RWPE1 (cell line): ENCODE measurements at regions of chr12 and their contacts with region 1.

Region 1: GRCh38 chr12:53267999-53268647 is at the start of gene ESPL1:
- DNase-seq: peak; percentile 87
- H3K27ac ChIP-seq: peak within 1 kb of the TSS; percentile 77
- CTCF ChIP-seq: peak; percentile 60

Region 2: DNA sequence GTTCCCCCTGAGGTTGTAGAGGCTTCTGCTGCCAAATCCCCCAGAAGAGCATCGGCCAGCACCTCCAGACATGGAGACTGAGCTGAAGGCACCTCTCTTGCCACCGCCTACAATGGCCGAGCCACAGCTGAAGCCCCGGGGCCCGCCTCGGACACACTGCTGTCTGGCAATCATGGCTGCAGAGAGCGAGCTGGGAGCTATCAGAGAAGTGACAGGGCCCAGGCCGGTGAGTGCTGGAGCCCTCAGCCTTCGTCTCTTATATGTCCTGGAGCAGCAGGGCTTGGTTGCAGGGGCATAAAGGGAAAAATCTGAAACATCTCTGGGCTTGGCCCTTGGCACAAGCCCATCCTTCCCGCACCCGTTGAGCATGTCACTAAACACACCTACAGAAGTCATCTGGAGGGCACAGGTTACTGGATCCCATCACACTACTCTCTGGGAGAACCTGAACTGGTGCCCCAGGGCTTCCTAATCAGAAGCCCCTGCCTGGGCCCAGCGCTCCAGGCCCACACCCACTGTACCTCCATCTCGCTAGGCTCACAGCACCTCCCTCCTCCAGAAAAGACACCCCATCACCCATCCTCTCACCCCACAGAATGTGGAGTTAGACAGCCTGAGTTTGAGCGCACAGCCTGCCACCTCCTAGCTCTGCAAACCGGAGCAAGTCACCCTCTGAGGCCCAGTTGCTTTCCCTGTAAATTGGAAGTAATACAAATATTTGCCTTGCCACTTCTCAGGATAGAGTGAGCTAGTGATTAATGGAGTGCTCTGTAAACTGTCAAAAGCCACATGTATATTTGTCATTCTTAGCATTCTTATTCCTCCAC is 454.0 kb before region 1 on chr12 and contains the start of gene KRT4:
- CTCF ChIA-PET with region 1: no interaction called
- POLR2A ChIA-PET with region 1: no interaction called
- DNase-seq: no peak
- H3K27ac ChIP-seq: no peak within 1 kb of the TSS
- CTCF ChIP-seq: no peak

Region 3: GRCh38 chr12:53174881-53175491 is 93.1 kb before region 1 on chr12:
- CTCF ChIA-PET with region 1: no interaction called
- POLR2A ChIA-PET with region 1: no interaction called
- DNase-seq: no peak
- H3K27ac ChIP-seq: peak overlapping the region; percentile 22
- CTCF ChIP-seq: no peak

Region 4: GRCh38 chr12:53251477-53252348 is 16.4 kb before region 1 on chr12:
- CTCF ChIA-PET with region 1: interaction called, 8 read pairs
- POLR2A ChIA-PET with region 1: interaction called, 11 read pairs
- DNase-seq: peak; percentile 83
- H3K27ac ChIP-seq: peak overlapping the region; percentile 88
- CTCF ChIP-seq: no peak; the same call in none of the 2 replicates

Region 5: DNA sequence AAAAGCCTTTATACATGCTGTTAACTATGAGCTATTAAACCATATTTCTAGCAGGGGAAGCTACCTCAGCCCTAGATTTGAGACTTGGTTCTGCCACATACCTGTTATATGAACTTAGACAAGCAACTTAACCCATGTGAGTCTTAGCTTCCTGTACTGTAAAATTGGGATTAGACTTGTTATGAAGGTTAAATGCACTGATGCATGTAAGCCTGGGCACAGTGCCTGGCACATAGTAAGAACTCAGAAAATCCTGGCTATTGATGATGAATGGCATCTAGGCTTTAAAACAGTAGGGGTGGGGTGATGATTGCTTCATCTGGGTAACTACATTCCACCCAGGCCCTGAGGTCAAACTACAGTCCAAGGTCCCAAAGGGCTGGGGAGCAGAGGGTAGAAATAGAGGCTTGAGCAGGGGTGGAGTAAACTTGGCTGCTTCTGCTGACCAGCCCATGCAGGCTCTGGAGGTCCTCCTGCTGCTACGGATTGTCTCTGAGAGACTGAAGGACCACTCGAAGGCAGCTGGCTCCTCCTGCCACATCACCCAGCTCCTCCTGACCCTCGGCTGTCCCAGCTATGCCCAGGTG is 11.3 kb after region 1 on chr12:
- CTCF ChIA-PET with region 1: no interaction called
- POLR2A ChIA-PET with region 1: interaction called, 10 read pairs
- DNase-seq: no peak
- H3K27ac ChIP-seq: no peak overlapping the region
- CTCF ChIP-seq: no peak